Endothelial cell of umbilical vein (primary cell): ENCODE measurements at regions of chr12 and their contacts with region 1.

Region 1: GRCh38 chr12:30985814-30986452 is 59.4 kb downstream of the TSPAN11 start:
- DNase-seq: peak; percentile 65
- H3K4me3 ChIP-seq: no peak overlapping the region
- H3K27ac ChIP-seq: no peak overlapping the region
- H3K4me1 ChIP-seq: no peaks in the 10 kb centered on the region
- H3K27me3 ChIP-seq: no peaks in the 10 kb centered on the region
- CTCF ChIP-seq: peak; percentile 75 to 95
- POLR2A ChIP-seq: no peak

Region 2: GRCh38 chr12:30882706-30883105 is 103.2 kb before region 1 on chr12:
- CTCF ChIA-PET with region 1: interaction called, 37 read pairs
- POLR2A ChIA-PET with region 1: no interaction called
- dilution Hi-C with region 1: no loop called
- intact Hi-C with region 1: loop called (anchors 1 kb)
- DNase-seq: peak; percentile 22
- H3K4me3 ChIP-seq: no peak overlapping the region
- H3K27ac ChIP-seq: no peak overlapping the region
- H3K4me1 ChIP-seq: no peaks in the 10 kb centered on the region
- H3K27me3 ChIP-seq: peaks cover 11 to 25% of the 10 kb centered on the region in 2 experiments
- CTCF ChIP-seq: no peak
- POLR2A ChIP-seq: no peak

Region 3: GRCh38 chr12:30996255-30996654 is 10.3 kb after region 1 on chr12:
- CTCF ChIA-PET with region 1: interaction called, 23 read pairs
- POLR2A ChIA-PET with region 1: no interaction called
- dilution Hi-C with region 1: no loop called
- intact Hi-C with region 1: no loop called
- DNase-seq: peak; percentile 94
- H3K4me3 ChIP-seq: no peak overlapping the region
- H3K27ac ChIP-seq: no peak overlapping the region
- H3K4me1 ChIP-seq: peaks cover 21% of the 10 kb centered on the region
- H3K27me3 ChIP-seq: no peaks in the 10 kb centered on the region
- CTCF ChIP-seq: no peak
- POLR2A ChIP-seq: no peak

Region 4: DNA sequence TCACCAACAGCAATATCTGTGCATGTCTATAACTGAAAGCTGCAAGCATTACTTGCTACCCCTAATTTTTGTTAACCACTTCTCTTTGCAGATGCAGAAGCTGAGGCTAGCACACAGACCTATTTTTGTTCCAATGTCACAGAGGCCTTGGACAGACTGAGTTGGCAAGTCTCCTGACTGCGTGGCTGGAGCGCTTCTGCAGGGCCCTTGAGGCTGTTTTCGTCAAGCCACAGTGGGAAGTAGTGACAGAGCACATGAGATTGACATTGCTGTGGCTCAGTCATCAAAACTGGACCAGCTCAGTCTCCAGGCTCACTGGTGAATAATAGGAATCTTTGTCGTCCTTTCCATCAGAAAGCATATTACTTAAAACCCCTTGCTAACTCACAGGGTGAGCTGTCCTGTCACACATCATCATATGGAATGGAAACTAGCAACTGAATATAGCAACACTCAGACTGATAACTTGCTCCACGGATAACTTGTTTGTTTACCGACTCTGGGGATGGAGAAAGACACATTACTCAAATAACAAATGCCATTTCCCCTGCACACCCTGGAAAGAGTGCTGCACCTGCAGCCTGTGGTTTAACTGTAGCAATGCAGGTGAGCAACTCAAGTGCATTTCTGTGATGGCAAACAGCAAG is 44.1 kb after region 1 on chr12:
- CTCF ChIA-PET with region 1: interaction called, 4 read pairs
- POLR2A ChIA-PET with region 1: no interaction called
- dilution Hi-C with region 1: no loop called
- intact Hi-C with region 1: loop called (anchors 5 kb)
- DNase-seq: no peak
- H3K4me3 ChIP-seq: no peak overlapping the region
- H3K27ac ChIP-seq: no peak overlapping the region
- H3K4me1 ChIP-seq: no peaks in the 10 kb centered on the region
- H3K27me3 ChIP-seq: peaks cover 0 to 2% of the 10 kb centered on the region in 2 experiments
- CTCF ChIP-seq: no peak
- POLR2A ChIP-seq: no peak

Region 5: DNA sequence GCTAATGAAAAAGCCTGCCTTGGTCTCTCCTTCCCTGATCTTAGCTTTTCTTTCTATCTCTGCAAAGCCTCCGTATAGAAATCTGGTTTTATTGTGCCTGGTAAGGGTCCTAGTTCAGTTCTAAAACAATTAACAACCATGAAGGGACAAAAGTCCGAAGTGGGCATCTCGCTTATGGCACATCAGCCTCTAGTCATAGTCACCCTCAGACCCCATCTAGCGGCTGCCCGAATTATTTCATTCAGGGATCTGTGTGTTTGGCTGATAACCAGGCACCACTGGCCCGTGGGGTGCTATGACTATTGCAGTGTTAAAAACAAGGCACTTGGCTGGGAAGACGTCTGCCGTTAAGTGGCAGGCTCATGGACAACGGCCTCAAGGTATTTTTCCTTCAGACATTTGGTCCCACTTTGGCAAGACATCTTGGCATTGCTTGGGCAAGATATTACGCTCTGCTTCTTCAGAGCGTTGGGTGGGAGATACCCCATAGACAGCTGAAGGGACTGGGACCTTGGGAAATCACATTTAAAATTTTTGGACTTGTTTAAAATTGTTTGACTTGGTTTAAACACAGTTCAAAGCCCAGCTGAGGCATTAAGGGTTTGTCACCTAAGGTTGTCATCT is 252.9 kb after region 1 on chr12:
- CTCF ChIA-PET with region 1: interaction called, 6 read pairs
- POLR2A ChIA-PET with region 1: no interaction called
- dilution Hi-C with region 1: no loop called
- intact Hi-C with region 1: loop called (anchors 5 kb)
- DNase-seq: peak; percentile 67
- H3K4me3 ChIP-seq: no peak overlapping the region
- H3K27ac ChIP-seq: no peak overlapping the region
- H3K4me1 ChIP-seq: no peaks in the 10 kb centered on the region
- H3K27me3 ChIP-seq: peaks cover 11 to 16% of the 10 kb centered on the region in 2 experiments
- CTCF ChIP-seq: peak; percentile 68 to 75
- POLR2A ChIP-seq: no peak